CD8-positive, alpha-beta T cell (primary cell): ENCODE measurements at regions of chr2 and their contacts with region 1.

Region 1: DNA sequence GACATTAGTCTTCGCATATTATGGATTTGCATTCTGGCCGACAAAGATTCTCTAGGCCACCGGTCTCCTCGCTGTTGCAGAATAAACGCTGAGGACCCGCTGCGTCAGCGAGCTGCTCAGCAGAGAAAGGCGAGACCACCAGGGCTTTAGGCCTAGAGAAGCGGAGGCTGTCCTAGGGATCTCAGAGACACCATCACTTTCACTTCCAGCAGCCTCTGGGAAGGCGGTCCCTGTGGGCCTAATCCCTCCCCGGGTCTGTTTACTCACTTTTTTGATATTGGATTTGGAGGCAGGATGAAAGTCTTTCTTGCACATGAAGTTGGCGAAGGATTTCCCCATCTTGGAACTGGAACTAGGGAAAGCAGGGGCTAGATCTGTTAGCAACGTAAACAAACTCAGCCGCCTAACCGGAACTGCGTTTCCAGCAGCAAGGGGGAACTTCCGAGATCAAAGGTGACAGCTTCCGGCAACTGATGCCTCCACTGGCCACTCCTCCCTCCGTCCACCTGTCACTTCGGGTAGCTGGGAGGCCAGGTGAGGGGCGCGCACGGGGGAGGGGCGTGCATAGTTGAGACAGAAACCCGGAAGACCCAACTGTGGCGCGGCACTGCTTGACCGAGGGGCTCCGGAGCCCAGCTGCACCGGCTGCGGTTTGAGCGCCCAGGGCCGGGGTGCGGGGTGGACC is at the start of gene SCRN3:
- DNase-seq: peak; percentile 55 to 92 (median 79)
- ATAC-seq: peak; percentile 90
- H3K4me3 ChIP-seq: peak within 1 kb of the TSS; percentile 78 to 91
- H3K4me3 Mint-ChIP-seq: peak within 1 kb of the TSS; percentile 98
- H3K27ac ChIP-seq: peak within 1 kb of the TSS; percentile 93 to 97
- H3K27ac Mint-ChIP-seq: peak within 1 kb of the TSS; percentile 100
- H3K4me1 ChIP-seq: peaks cover 29% of the 10 kb centered on the region
- H3K4me1 Mint-ChIP-seq: peaks cover 55% of the 10 kb centered on the region
- H3K27me3 ChIP-seq: no peaks in the 10 kb centered on the region
- H3K27me3 Mint-ChIP-seq: no peaks in the 10 kb centered on the region
- CTCF ChIP-seq: no peak
- total RNA-seq, gene SCRN3: 5.9 to 7.3 TPM

Region 2: GRCh38 chr2:174487108-174487819 is 91.8 kb after region 1 on chr2:
- CTCF ChIA-PET with region 1: no interaction called
- POLR2A ChIA-PET with region 1: no interaction called
- intact Hi-C with region 1: loop called in 1 of 2 experiments (anchors 5 kb)
- DNase-seq: peak; percentile 77 to 98 (median 97)
- ATAC-seq: peak; percentile 74
- H3K4me3 ChIP-seq: peak overlapping the region; percentile 83 to 86
- H3K4me3 Mint-ChIP-seq: peak overlapping the region; percentile 97
- H3K27ac ChIP-seq: peak overlapping the region; percentile 69 to 85
- H3K27ac Mint-ChIP-seq: peak overlapping the region; percentile 88
- H3K4me1 ChIP-seq: peaks cover 59% of the 10 kb centered on the region
- H3K4me1 Mint-ChIP-seq: peaks cover 73% of the 10 kb centered on the region
- H3K27me3 ChIP-seq: no peaks in the 10 kb centered on the region
- H3K27me3 Mint-ChIP-seq: no peaks in the 10 kb centered on the region
- CTCF ChIP-seq: no peak

Region 3: DNA sequence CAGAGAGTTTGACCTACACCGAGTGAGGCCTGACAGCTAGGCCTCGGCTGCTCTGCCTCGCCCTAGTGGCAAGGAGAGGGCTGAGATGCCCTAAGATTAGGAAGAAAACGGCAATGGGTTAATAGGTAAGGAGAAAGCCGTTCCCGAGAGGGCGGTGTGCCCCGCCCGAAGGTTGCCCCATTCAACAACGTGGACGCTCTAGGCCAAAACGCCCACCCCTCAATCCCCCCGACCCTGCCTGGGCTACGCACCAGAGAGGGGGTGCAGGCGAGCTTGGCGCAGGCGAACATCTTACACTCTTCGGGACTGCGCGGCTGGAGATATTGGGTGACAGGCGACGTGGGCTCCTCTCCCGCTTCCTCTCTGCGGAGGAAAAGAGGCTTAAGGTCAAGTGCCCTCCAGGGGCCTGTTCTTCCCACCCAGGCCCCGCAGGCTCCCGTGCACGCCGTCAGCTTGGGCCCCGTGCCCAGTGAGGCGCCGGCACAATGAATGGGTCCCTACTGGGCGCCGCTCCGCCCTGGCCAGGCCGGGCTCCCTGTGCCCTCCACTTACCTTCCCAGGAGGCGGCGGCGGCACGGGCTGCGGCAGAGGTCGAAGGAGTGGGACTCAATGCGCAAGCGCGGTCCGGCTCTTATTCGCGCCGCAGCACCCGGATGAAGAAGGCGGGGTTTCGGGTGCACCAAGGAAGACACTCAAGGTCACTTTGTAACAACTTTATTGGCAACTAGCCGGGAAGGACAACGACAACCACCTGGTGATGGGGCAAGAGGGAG is 785.9 kb after region 1 on chr2 and contains the start of gene ATP5MC3:
- CTCF ChIA-PET with region 1: no interaction called
- POLR2A ChIA-PET with region 1: no interaction called
- intact Hi-C with region 1: loop called in 1 of 2 experiments (anchors 5 kb)
- DNase-seq: peak; percentile 80 to 97 (median 92)
- ATAC-seq: peak; percentile 90
- H3K4me3 ChIP-seq: peak within 1 kb of the TSS; percentile 88 to 96
- H3K4me3 Mint-ChIP-seq: peak within 1 kb of the TSS; percentile 94
- H3K27ac ChIP-seq: peak within 1 kb of the TSS; percentile 73 to 76
- H3K27ac Mint-ChIP-seq: peak within 1 kb of the TSS; percentile 87
- H3K4me1 ChIP-seq: peaks cover 13% of the 10 kb centered on the region
- H3K4me1 Mint-ChIP-seq: peaks cover 27% of the 10 kb centered on the region
- H3K27me3 ChIP-seq: no peaks in the 10 kb centered on the region
- H3K27me3 Mint-ChIP-seq: no peaks in the 10 kb centered on the region
- CTCF ChIP-seq: no peak
- total RNA-seq, gene ATP5MC3: 70.2 to 73.4 TPM